ENCODE measurements at regions of chr9 and their contacts with region 1.

Region 1: DNA sequence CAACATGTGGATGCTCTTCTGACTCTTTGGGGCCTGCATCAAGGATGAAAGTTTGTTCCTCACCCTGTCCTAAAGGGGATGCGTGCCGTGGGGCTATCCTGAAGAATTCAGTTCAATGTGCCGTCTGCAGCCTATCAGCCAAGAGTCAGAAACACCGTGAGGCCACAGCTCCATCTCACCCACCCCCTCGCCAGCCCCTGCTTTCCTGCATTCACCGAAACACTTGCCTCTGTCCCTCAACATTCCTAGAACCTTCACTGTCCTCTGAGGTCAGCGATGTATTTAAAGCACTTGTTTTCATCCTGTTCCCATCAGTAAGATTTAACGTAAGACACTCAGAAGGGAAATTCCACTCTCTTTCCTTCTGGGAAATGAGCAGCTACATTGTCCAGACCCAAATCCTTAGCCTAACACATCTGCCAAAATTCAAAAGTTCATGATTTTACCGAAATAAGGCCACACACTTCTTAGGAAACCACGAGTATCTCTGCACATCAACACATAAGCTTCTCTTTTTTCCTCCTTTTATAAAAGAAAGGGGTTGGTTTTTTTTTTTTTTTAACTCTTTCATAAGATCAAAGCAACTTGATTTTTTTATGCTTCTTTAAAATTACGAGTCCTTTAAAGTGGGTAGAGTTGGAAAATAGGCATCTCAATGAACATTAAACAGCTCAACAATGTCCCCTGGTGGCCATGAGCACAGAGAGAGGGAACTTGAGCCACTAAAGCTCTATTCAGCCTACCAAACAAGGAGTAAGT is 100.7 kb downstream of the SUSD1 start:
- DNase-seq: peak; percentile 71
- H3K4me3 Mint-ChIP-seq: peak overlapping the region; percentile 5
- H3K27ac Mint-ChIP-seq: peak overlapping the region; percentile 3
- H3K4me1 Mint-ChIP-seq: peaks cover 32% of the 10 kb centered on the region
- H3K27me3 Mint-ChIP-seq: peaks cover 1% of the 10 kb centered on the region

Region 2: GRCh38 chr9:111752455-111752854 is 322.0 kb before region 1 on chr9:
- CTCF ChIA-PET with region 1: interaction called, 190 read pairs
- POLR2A ChIA-PET with region 1: no interaction called
- intact Hi-C with region 1: no loop called
- DNase-seq: no peak
- H3K4me3 Mint-ChIP-seq: no peak overlapping the region
- H3K27ac Mint-ChIP-seq: no peak overlapping the region
- H3K4me1 Mint-ChIP-seq: no peaks in the 10 kb centered on the region
- H3K27me3 Mint-ChIP-seq: no peaks in the 10 kb centered on the region

Region 3: GRCh38 chr9:111759762-111760639 is 314.4 kb before region 1 on chr9:
- CTCF ChIA-PET with region 1: interaction called, 190 read pairs
- POLR2A ChIA-PET with region 1: no interaction called
- intact Hi-C with region 1: loop called (anchors 1 kb)
- DNase-seq: peak; percentile 22
- H3K4me3 Mint-ChIP-seq: no peak overlapping the region
- H3K27ac Mint-ChIP-seq: no peak overlapping the region
- H3K4me1 Mint-ChIP-seq: peaks cover 2% of the 10 kb centered on the region
- H3K27me3 Mint-ChIP-seq: no peaks in the 10 kb centered on the region

Region 4: GRCh38 chr9:111828193-111828592 is 246.2 kb before region 1 on chr9:
- CTCF ChIA-PET with region 1: interaction called, 7 read pairs
- POLR2A ChIA-PET with region 1: no interaction called
- intact Hi-C with region 1: loop called (anchors 2 kb)
- DNase-seq: no peak
- H3K4me3 Mint-ChIP-seq: no peak overlapping the region
- H3K27ac Mint-ChIP-seq: no peak overlapping the region
- H3K4me1 Mint-ChIP-seq: no peaks in the 10 kb centered on the region
- H3K27me3 Mint-ChIP-seq: no peaks in the 10 kb centered on the region

Region 5: GRCh38 chr9:111992523-111992922 is 81.9 kb before region 1 on chr9:
- CTCF ChIA-PET with region 1: interaction called, 10 read pairs
- POLR2A ChIA-PET with region 1: no interaction called
- intact Hi-C with region 1: no loop called
- DNase-seq: peak; percentile 45
- H3K4me3 Mint-ChIP-seq: no peak overlapping the region
- H3K27ac Mint-ChIP-seq: peak overlapping the region; percentile 18
- H3K4me1 Mint-ChIP-seq: peaks cover 34% of the 10 kb centered on the region
- H3K27me3 Mint-ChIP-seq: peaks cover 2% of the 10 kb centered on the region

Region 6: GRCh38 chr9:112028280-112029221 is 45.9 kb before region 1 on chr9:
- CTCF ChIA-PET with region 1: interaction called, 10 read pairs
- POLR2A ChIA-PET with region 1: no interaction called
- intact Hi-C with region 1: no loop called
- DNase-seq: peak; percentile 59
- H3K4me3 Mint-ChIP-seq: no peak overlapping the region
- H3K27ac Mint-ChIP-seq: no peak overlapping the region
- H3K4me1 Mint-ChIP-seq: peaks cover 43% of the 10 kb centered on the region
- H3K27me3 Mint-ChIP-seq: peaks cover 6% of the 10 kb centered on the region